Activated CD8-positive, alpha-beta T cell treated with anti-CD3 and anti-CD28 coated beads, Interleukin-2, amount 10 ng/mL, durations not matched to agents 7 days and 5 days (primary cell): ENCODE measurements at regions of chr13 and their contacts with region 1.

Region 1: DNA sequence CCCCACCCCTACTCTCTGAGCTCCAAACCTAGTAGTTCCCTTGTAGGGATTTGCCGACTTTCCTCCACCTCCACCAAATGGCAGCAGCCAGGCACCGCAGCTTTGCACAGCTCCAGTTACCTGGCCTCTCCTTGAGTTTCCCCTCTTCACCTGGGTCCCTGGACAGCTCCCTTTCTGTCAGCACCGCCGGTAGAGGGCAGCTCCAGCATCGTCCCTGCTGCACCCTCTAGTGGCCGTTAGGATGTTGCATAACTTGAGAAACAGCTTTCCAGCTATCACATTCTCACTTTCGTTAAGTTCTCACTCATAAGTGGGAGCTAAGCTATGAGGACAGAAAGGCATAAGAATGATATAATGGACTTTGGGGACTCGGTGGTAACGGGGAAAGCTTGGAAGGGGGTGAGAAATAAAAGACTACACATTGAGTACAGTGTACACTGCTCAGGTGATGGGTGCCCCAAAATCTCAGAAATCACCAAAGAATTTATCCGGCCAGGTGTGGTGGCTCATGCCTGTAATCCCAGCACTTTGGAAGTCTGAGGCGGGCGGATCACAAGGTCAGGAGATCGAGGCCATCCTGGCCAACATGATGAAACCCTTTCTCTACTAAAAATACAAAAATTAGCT is 60.4 kb upstream of the OLFM4 start:
- DNase-seq: peak; percentile 74
- ATAC-seq: peak; percentile 97
- H3K4me3 Mint-ChIP-seq: no peak overlapping the region
- H3K27ac Mint-ChIP-seq: no peak overlapping the region
- H3K4me1 Mint-ChIP-seq: no peaks in the 10 kb centered on the region
- H3K27me3 Mint-ChIP-seq: peaks cover 3% of the 10 kb centered on the region

Region 2: GRCh38 chr13:52617070-52618060 is 350.8 kb before region 1 on chr13:
- CTCF ChIA-PET with region 1: interaction called, 10 read pairs
- POLR2A ChIA-PET with region 1: no interaction called
- DNase-seq: peak; percentile 90
- ATAC-seq: peak; percentile 96
- H3K4me3 Mint-ChIP-seq: peak overlapping the region; percentile 100
- H3K27ac Mint-ChIP-seq: peak overlapping the region; percentile 92
- H3K4me1 Mint-ChIP-seq: peaks cover 32% of the 10 kb centered on the region
- H3K27me3 Mint-ChIP-seq: peaks cover 9% of the 10 kb centered on the region

Region 3: DNA sequence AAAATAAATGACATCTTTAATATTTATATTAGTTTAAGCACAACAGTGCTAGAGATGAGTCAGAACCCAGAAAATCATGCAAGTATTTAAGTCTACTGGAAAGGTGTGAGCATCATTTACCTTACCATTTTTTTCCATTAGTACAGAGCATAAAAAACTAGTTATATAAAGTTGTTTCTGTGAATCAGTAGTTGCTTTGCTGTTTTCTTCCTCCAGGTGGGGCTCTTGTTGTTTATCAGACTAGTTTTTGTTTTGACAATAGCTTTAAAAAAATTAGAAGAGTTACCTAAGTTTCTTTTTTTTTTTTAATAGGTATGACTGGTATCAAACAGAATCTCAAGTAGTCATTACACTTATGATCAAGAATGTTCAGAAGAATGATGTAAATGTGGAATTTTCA is 302.9 kb before region 1 on chr13:
- CTCF ChIA-PET with region 1: interaction called, 15 read pairs
- POLR2A ChIA-PET with region 1: no interaction called
- DNase-seq: no peak
- ATAC-seq: peak; percentile 42
- H3K4me3 Mint-ChIP-seq: no peak overlapping the region
- H3K27ac Mint-ChIP-seq: no peak overlapping the region
- H3K4me1 Mint-ChIP-seq: no peaks in the 10 kb centered on the region
- H3K27me3 Mint-ChIP-seq: no peaks in the 10 kb centered on the region

Region 4: GRCh38 chr13:52955472-52955874 is 12.7 kb before region 1 on chr13:
- CTCF ChIA-PET with region 1: interaction called, 32 read pairs
- POLR2A ChIA-PET with region 1: no interaction called
- DNase-seq: no peak
- ATAC-seq: no peak
- H3K4me3 Mint-ChIP-seq: no peak overlapping the region
- H3K27ac Mint-ChIP-seq: no peak overlapping the region
- H3K4me1 Mint-ChIP-seq: no peaks in the 10 kb centered on the region
- H3K27me3 Mint-ChIP-seq: no peaks in the 10 kb centered on the region

Region 5: DNA sequence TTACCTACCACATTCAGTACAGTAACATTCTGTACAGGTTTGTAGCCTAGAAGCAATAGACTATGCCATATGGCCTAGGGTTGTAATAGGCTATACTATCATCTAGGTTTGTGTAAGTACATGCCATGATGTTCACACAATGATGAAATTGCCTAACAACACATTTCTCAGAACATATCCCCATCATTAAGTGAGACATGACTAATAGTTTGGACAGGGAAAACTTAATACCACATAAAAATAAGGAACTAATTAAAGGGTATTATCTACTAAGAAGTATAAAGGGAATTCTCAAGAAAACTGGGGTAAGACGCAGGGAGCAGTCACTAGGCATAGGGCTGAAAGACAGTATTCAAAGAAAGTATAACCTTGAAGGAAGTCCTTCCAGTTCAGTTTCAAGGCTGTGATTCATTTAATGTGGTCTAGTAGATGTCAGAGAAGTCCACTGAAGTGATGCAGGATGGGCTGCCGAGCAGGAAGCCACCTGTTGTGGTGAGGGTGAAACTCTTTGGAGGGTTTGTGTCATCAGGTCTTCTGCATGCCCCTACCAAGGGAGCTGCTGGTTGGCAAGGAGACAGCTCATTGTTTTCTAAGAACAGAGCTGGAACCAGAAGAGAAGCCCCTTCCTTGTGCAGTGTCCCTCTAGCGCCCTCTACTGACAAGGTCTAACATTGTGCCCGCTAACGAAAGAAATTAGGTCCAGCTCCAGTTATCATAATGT is 183.3 kb after region 1 on chr13:
- CTCF ChIA-PET with region 1: interaction called, 12 read pairs
- POLR2A ChIA-PET with region 1: no interaction called
- DNase-seq: peak; percentile 61
- ATAC-seq: peak; percentile 88
- H3K4me3 Mint-ChIP-seq: no peak overlapping the region
- H3K27ac Mint-ChIP-seq: no peak overlapping the region
- H3K4me1 Mint-ChIP-seq: peaks cover 11% of the 10 kb centered on the region
- H3K27me3 Mint-ChIP-seq: no peaks in the 10 kb centered on the region

Region 6: GRCh38 chr13:53445686-53446085 is 477.5 kb after region 1 on chr13:
- CTCF ChIA-PET with region 1: no interaction called
- POLR2A ChIA-PET with region 1: no interaction called
- DNase-seq: no peak
- ATAC-seq: no peak
- H3K4me3 Mint-ChIP-seq: no peak overlapping the region
- H3K27ac Mint-ChIP-seq: no peak overlapping the region
- H3K4me1 Mint-ChIP-seq: no peaks in the 10 kb centered on the region
- H3K27me3 Mint-ChIP-seq: no peaks in the 10 kb centered on the region